Heart left ventricle (tissue), 16 donors: ENCODE measurements at regions of chr6 and their contacts with region 1.

Region 1: GRCh38 chr6:150177952-150178520 is 35.2 kb downstream of the PPP1R14C start:
- DNase-seq: peak in 4 of 5 donors; percentile 44 to 87 (median 56)
- ATAC-seq: peak; percentile 64 to 74 (median 71)
- H3K4me3 ChIP-seq: no peak overlapping the region
- H3K27ac ChIP-seq: peak overlapping the region; percentile 72 to 99 (median 90)
- H3K4me1 ChIP-seq: peaks cover 0 to 59% (median 16%) of the 10 kb centered on the region in 12 donors
- H3K27me3 ChIP-seq: no peaks in the 10 kb centered on the region
- CTCF ChIP-seq: no peak
- POLR2A ChIP-seq: no peak

Region 2: DNA sequence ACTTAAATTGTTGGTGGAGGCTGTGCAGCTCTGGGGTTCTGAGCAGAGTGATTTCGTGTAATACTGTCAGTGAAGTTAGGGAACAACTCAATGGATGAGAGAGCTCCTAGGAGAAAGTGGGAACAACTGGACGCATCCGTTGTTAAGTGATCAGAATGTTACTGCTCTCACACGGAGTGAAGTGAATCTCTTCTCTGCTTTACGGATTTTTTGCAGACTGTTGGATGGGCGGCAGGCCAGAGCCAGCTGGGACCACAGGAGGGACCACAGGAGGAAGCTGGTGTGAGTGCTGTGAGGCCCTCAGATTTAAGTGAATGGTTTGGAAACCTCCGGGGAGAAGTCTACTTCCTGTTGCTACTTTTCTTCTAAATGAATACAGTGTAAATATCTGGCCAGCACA is 58.9 kb before region 1 on chr6:
- intact Hi-C with region 1: no loop called
- DNase-seq: peak in 1 of 5 donors; percentile 27
- ATAC-seq: peak in 3 of 4 donors; percentile 43 to 59 (median 47)
- H3K4me3 ChIP-seq: no peak overlapping the region
- H3K27ac ChIP-seq: no peak overlapping the region
- H3K4me1 ChIP-seq: peaks cover 0 to 7% (median 0%) of the 10 kb centered on the region in 12 donors
- H3K27me3 ChIP-seq: no peaks in the 10 kb centered on the region
- CTCF ChIP-seq: no peak
- POLR2A ChIP-seq: no peak

Region 3: DNA sequence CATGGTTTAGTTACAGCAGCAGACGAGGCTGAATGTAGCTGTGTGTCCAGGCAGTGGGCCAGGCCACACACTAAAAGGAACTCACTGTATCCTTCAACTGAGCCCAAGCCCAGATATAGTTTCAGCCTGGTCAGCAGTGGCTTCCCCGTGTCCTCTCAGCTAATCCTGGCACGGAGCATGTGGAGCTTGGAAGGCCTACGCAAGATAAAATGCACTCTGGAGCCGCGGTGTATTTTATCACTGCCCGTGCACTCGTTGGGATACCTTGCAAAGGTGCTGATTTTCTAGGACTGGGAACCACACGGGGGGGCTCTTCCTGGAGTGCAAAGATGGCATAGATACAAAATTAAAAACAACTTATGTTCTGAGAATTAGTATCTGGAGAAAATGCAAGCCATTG is 142.4 kb after region 1 on chr6:
- intact Hi-C with region 1: loop called in 1 of 10 experiments (anchors 1 kb)
- DNase-seq: peak in 4 of 5 donors; percentile 71 to 85 (median 76)
- ATAC-seq: peak; percentile 95 to 98 (median 97)
- H3K4me3 ChIP-seq: no peak overlapping the region
- H3K27ac ChIP-seq: peak overlapping the region in 4 of 12 donors; percentile 4 to 51 (median 30)
- H3K4me1 ChIP-seq: peaks cover 3 to 59% (median 16%) of the 10 kb centered on the region in 12 donors
- H3K27me3 ChIP-seq: no peaks in the 10 kb centered on the region
- CTCF ChIP-seq: no peak
- POLR2A ChIP-seq: no peak